Mammary epithelial cell (primary cell): ENCODE measurements at regions of chr3 and their contacts with region 1.

Region 1: GRCh38 chr3:47324278-47324865 is 41.6 kb downstream of the KLHL18 start:
- DNase-seq: peak; percentile 64
- H3K4me3 ChIP-seq: no peak overlapping the region
- H3K27ac ChIP-seq: peak overlapping the region; percentile 43
- H3K4me1 ChIP-seq: peaks cover 10% of the 10 kb centered on the region
- H3K27me3 ChIP-seq: no peaks in the 10 kb centered on the region
- CTCF ChIP-seq: peak; percentile 79 to 84

Region 2: GRCh38 chr3:46866720-46867549 is 457.4 kb before region 1 on chr3:
- CTCF ChIA-PET with region 1: no interaction called
- dilution Hi-C with region 1: no loop called
- in situ Hi-C with region 1: no loop called
- intact Hi-C with region 1: loop called (anchors 1 kb)
- DNase-seq: peak; percentile 22
- H3K4me3 ChIP-seq: no peak overlapping the region
- H3K27ac ChIP-seq: no peak overlapping the region
- H3K4me1 ChIP-seq: no peaks in the 10 kb centered on the region
- H3K27me3 ChIP-seq: no peaks in the 10 kb centered on the region
- CTCF ChIP-seq: peak; percentile 74 to 95

Region 3: DNA sequence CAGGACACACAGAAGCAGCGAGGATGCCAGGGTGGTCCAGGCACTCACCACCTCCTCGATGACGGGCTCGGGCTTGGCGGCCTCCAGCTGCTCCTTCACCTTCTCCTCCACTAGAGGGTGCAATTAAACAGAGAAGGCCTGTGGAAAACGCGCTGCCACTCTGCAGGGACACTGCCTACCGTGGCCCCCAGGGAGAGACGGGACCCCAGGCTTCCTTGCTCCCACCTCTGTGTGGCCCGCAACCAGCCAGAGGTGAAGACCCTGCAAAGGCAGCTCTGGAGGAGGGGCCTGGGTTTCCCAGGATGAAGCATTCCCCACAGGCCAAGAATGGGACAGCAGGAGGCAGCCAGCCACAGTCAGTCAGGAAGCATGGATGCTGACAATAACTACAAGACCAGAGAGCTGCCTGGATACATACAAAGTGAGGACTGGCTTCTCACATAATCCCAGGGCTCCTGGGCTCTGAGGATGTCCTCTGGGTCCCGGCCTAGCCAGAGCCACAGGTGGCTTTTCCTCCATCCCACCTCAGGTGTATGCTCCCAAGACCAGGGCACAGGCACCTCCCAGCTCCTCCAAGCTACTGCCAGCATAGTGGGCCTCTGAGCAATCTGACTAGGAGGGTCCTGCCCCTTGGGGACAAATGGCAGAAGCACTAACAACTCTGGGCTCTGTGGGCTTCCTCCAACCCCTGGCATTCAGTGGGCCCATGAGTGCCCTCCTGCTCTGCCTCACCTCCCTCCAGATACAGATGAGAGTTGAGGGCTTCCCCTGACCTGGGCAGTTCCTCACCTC is 400.6 kb before region 1 on chr3:
- CTCF ChIA-PET with region 1: no interaction called
- dilution Hi-C with region 1: no loop called
- in situ Hi-C with region 1: no loop called
- intact Hi-C with region 1: loop called (anchors 1 kb)
- DNase-seq: no peak
- H3K4me3 ChIP-seq: no peak overlapping the region
- H3K27ac ChIP-seq: no peak overlapping the region
- H3K4me1 ChIP-seq: no peaks in the 10 kb centered on the region
- H3K27me3 ChIP-seq: no peaks in the 10 kb centered on the region
- CTCF ChIP-seq: peak; percentile 57 to 72

Region 4: GRCh38 chr3:47082519-47082918 is 241.9 kb before region 1 on chr3:
- CTCF ChIA-PET with region 1: no interaction called
- dilution Hi-C with region 1: no loop called
- in situ Hi-C with region 1: no loop called
- intact Hi-C with region 1: loop called (anchors 10 kb)
- DNase-seq: no peak
- H3K4me3 ChIP-seq: no peak overlapping the region
- H3K27ac ChIP-seq: no peak overlapping the region
- H3K4me1 ChIP-seq: no peaks in the 10 kb centered on the region
- H3K27me3 ChIP-seq: no peaks in the 10 kb centered on the region
- CTCF ChIP-seq: no peak

Region 5: GRCh38 chr3:47250309-47251060 is 73.9 kb before region 1 on chr3:
- CTCF ChIA-PET with region 1: interaction called, 4 read pairs
- dilution Hi-C with region 1: no loop called
- in situ Hi-C with region 1: no loop called
- intact Hi-C with region 1: loop called (anchors 1 kb)
- DNase-seq: peak; percentile 20
- H3K4me3 ChIP-seq: no peak overlapping the region
- H3K27ac ChIP-seq: no peak overlapping the region
- H3K4me1 ChIP-seq: no peaks in the 10 kb centered on the region
- H3K27me3 ChIP-seq: no peaks in the 10 kb centered on the region
- CTCF ChIP-seq: peak; percentile 26 to 53